HepG2 (cell line): ENCODE measurements at regions of chr1 and their contacts with region 1.

Region 1: GRCh38 chr1:12326986-12327385 is 97.2 kb downstream of the VPS13D start:
- DNase-seq: no peak
- ATAC-seq: no peak
- H3K4me3 ChIP-seq: no peak overlapping the region
- H3K27ac ChIP-seq: no peak overlapping the region
- H3K4me1 ChIP-seq: no peaks in the 10 kb centered on the region
- H3K27me3 ChIP-seq: no peaks in the 10 kb centered on the region
- CTCF ChIP-seq: no peak
- EP300 ChIP-seq: no peak
- POLR2A ChIP-seq: no peak
- RAD21 ChIP-seq: no peak

Region 2: DNA sequence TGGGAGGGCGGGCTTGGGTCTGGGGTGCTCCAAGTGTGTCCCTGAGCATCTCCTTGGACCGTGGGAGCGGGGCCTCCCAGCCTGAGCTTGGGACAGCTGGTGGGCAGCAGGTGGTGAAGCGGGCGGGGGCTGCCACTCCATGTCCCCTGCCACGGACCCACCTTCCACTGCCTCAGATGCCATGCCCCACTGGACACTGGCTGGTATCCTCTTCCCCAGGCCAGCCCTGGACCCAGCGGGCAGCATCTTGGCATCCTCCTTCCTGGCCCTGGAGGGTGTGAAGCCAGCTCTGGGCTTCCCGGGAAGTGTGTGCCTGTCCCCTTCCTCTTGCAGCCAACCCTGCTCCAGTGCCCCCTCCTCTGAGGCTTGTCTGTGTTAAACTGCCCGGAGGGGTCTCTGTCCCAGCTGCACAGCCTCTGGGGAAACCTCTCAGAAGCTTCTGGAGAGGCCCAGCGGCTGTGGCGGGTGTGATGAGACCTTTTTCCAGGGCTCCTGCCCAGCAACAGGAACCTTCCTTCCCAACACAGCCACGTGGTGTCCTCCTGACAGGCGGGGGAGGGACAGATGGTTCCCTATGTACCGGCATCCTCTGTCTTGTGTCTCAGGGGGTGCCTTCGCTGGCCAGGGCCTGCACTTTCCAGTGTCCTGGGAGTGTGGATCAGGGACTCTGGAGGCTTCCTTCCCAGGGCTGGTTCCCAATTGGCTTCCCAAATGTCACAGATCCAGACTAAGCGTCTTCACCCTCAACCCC is 929.7 kb before region 1 on chr1:
- CTCF ChIA-PET with region 1: no interaction called
- POLR2A ChIA-PET with region 1: no interaction called
- in situ Hi-C with region 1: no loop called
- intact Hi-C with region 1: loop called (anchors 10 kb)
- DNase-seq: no peak
- ATAC-seq: no peak
- H3K4me3 ChIP-seq: no peak overlapping the region
- H3K27ac ChIP-seq: no peak overlapping the region
- H3K4me1 ChIP-seq: no peaks in the 10 kb centered on the region
- H3K27me3 ChIP-seq: peaks cover 8 to 44% of the 10 kb centered on the region in 2 experiments; a peak in 4 of 5 replicates
- CTCF ChIP-seq: no peak
- EP300 ChIP-seq: no peak
- POLR2A ChIP-seq: no peak
- RAD21 ChIP-seq: no peak

Region 3: GRCh38 chr1:12143631-12144155 is 183.3 kb before region 1 on chr1:
- CTCF ChIA-PET with region 1: no interaction called
- POLR2A ChIA-PET with region 1: no interaction called
- in situ Hi-C with region 1: no loop called
- intact Hi-C with region 1: no loop called
- DNase-seq: no peak
- ATAC-seq: 0 out of 3 replicates have a peak, but pooled peaks have one; percentile 12
- H3K4me3 ChIP-seq: no peak overlapping the region; a peak in 1 of 6 replicates
- H3K27ac ChIP-seq: no peak overlapping the region
- H3K4me1 ChIP-seq: peaks cover 41% of the 10 kb centered on the region
- H3K27me3 ChIP-seq: peaks cover 2 to 51% of the 10 kb centered on the region in 2 experiments; a peak in 4 of 5 replicates
- CTCF ChIP-seq: no peak
- EP300 ChIP-seq: no peak
- POLR2A ChIP-seq: no peak
- RAD21 ChIP-seq: no peak

Region 4: DNA sequence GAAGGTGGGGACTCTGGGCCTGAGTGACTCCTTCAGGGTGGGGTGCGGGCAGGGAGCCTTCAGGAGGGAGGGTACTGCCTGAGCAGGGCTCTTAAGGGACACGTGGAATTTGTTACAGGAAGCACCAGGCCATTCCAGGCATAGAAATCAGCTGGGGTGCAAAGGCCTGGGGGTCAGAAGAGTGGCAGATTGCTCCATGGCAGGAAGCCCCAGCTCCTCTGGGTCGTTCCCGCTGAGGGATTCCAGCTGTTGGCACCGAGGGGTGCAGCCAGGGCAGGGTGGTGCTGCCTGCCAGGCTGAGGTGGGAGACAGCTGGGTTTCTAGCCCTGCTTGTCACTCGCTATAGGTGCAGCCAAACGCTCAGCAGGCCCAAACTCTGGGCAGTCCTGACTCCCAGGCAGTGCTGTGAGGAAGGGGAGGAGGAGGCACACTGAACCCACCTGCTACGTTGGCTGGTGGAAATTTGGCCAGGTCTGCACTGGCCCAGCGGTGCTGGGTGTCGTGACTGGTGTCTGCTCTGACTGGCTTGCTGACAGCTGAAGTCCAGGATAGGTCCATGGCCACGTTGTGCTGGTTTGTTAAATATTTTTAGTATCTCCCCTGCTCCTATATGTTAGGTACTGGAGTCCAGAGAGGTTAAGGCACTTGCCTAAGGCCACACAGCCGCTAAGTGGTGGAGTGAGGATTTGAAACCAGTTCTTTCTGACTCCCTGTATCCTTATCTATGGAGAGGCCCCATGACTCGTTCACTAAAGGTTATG is 140.9 kb before region 1 on chr1:
- CTCF ChIA-PET with region 1: no interaction called
- POLR2A ChIA-PET with region 1: no interaction called
- in situ Hi-C with region 1: no loop called
- intact Hi-C with region 1: no loop called
- DNase-seq: no peak
- ATAC-seq: peak; percentile 36
- H3K4me3 ChIP-seq: peak overlapping the region in 1 of 3 experiments; percentile 51; a peak in 1 of 6 replicates
- H3K27ac ChIP-seq: no peak overlapping the region
- H3K4me1 ChIP-seq: peaks cover 44% of the 10 kb centered on the region
- H3K27me3 ChIP-seq: peaks cover 8 to 31% of the 10 kb centered on the region in 2 experiments; a peak in 4 of 5 replicates
- CTCF ChIP-seq: no peak
- EP300 ChIP-seq: no peak
- POLR2A ChIP-seq: no peak
- RAD21 ChIP-seq: no peak